ENCODE measurements at regions of chr17 and their contacts with region 1.

Region 1: GRCh38 chr17:48074315-48075081 is 26.3 kb downstream of the NFE2L1 start:
- DNase-seq: peak in 7 of 10 donors; percentile 57 to 89 (median 70)

Region 2: DNA sequence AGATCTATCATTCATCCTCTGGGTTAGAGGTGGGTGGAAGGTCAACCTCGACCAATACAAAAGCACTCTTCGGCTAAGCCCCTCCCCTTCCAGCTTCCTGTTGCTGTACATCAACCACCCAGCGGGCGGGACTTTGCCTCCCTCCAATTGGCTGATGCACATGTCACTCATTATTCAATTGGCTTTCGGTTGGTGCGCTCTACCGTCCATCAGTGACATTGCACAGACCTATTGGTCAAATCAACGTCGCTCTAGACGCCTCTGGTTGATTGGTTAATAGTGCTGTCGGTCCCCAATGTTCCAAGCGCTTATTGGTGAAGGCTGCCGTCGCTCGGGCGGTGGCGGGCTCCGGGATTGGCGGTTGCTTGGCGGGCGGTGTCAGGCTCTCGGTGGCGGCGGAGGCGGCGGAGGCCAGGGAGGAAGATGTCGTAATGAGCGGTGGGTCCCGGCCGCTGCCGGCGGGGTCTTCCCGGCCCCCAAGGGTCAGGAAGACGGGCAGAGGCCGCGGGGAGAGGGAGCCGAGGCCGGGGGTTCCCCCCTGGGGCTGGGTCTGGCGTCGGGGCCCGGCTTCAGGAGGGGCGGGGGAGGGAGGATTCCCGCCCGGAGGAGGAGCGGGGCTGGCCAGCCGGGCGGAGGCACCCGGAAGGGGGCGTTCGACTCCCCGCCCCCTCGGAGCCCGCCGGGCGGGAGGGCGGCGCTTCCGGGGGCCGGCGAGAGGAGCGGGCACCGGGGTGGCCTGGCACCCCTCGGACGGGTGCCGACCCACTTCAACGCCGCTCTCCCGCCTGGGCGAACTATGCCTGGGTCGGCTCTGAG is 178.4 kb before region 1 on chr17 and contains the start of gene SP2:
- intact Hi-C with region 1: no loop called
- DNase-seq: peak; percentile 97 to 100 (median 98)

Region 3: GRCh38 chr17:48024937-48025906 is 49.3 kb before region 1 on chr17:
- intact Hi-C with region 1: loop called (anchors 1 kb)
- DNase-seq: peak; percentile 97 to 100 (median 98)

Region 4: DNA sequence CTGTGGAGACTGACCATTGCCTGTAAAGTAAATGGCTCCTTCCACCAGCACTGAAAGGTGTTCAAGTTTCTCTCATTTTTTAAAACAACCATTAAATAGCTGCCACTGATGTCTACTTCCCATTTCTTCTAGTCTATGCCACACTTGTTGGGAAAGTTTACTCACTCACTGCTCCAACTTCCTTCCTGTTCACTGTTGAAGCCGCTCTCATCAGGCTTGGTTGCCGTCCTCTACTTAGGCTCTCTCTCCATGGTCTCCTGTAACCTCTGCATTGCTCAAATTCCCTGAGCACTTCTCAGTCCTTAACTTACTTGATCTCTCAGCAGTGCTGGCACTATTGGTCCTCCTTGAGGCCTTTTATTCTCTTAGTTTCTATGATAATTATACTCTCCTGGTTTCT is 65.4 kb after region 1 on chr17:
- intact Hi-C with region 1: no loop called
- DNase-seq: no peak

Measured in posterior cingulate gyrus (tissue), 11 donors.